Activated naive CD4-positive, alpha-beta T cell treated with anti-CD3 and anti-CD28 coated beads for 36 hours (primary cell): ENCODE measurements at regions of chr14 and their contacts with region 1.

Region 1: DNA sequence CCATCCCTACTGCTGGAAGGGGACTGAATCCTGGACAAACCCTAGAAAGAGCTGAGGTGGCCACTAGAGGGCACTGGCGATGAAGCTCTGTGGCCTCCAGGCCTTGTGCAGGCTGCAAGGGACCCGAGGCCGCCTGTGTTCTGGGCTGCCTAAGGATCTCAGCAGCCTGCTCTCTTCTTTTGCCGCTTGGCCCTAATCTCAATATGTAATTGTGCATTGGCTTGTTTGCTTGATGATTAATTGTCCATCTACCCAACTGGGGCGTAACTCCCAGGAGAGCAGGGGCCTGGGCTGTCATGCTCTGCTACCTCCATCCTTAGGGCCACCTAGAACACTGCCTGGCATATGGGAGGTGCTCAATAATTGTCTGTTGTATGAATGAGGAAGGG is 73.8 kb downstream of the SYNE3 start:
- DNase-seq: peak; percentile 88
- H3K4me3 Mint-ChIP-seq: no peak overlapping the region
- H3K27ac Mint-ChIP-seq: peak overlapping the region; percentile 20
- H3K4me1 Mint-ChIP-seq: peaks cover 7% of the 10 kb centered on the region
- H3K27me3 Mint-ChIP-seq: no peaks in the 10 kb centered on the region

Region 2: DNA sequence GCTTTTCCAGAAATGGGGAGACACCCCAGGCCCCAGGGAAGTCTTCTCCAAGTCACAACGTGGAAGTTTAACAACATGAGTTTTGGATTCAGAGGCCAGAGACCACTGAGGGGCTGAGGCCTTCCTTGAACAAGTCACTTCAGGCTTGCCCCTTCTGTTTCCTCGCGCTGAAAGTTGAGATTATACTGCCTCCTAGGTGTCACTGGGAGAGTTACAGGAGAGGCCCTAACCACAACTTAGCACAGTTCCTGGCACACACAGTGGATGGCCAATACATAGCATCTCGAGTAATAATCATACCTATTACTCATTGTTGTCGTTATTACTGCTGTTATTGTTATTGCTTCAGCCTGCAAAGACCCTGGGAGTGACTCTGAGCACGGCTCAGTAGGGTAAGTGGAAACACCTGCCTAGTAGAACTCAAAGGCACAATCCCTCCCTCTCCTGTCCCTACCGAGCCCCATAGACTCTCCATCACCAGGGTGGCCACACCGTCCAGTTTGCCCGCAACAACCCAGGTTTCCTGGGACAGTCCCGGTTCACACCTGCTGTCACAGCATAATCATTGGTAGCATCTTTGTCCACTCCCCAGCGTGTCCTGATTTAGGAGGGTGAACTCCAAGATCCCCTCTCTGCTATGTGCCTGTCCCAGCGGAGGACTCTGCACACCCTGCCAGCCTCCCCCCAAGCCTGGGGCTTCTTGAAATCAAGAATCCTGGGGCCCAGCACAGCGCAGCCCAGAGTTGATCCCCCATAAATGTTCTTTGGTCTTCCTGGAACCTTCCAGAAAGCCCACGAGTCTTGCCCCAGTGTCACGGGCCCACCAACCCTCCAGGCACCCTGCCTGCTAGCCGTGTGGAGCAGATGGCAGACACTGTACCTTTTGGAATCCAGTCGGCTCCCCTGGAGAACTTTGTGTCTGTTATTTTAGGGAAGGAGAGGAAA is 11.2 kb before region 1 on chr14:
- CTCF ChIA-PET with region 1: interaction called, 19 read pairs
- intact Hi-C with region 1: no loop called
- DNase-seq: peak; percentile 30
- H3K4me3 Mint-ChIP-seq: no peak overlapping the region
- H3K27ac Mint-ChIP-seq: no peak overlapping the region
- H3K4me1 Mint-ChIP-seq: no peaks in the 10 kb centered on the region
- H3K27me3 Mint-ChIP-seq: no peaks in the 10 kb centered on the region

Region 3: GRCh38 chr14:95460647-95461478 is 18.2 kb after region 1 on chr14:
- CTCF ChIA-PET with region 1: interaction called, 27 read pairs
- intact Hi-C with region 1: no loop called
- DNase-seq: no peak
- H3K4me3 Mint-ChIP-seq: no peak overlapping the region
- H3K27ac Mint-ChIP-seq: no peak overlapping the region
- H3K4me1 Mint-ChIP-seq: peaks cover 61% of the 10 kb centered on the region
- H3K27me3 Mint-ChIP-seq: no peaks in the 10 kb centered on the region

Region 4: DNA sequence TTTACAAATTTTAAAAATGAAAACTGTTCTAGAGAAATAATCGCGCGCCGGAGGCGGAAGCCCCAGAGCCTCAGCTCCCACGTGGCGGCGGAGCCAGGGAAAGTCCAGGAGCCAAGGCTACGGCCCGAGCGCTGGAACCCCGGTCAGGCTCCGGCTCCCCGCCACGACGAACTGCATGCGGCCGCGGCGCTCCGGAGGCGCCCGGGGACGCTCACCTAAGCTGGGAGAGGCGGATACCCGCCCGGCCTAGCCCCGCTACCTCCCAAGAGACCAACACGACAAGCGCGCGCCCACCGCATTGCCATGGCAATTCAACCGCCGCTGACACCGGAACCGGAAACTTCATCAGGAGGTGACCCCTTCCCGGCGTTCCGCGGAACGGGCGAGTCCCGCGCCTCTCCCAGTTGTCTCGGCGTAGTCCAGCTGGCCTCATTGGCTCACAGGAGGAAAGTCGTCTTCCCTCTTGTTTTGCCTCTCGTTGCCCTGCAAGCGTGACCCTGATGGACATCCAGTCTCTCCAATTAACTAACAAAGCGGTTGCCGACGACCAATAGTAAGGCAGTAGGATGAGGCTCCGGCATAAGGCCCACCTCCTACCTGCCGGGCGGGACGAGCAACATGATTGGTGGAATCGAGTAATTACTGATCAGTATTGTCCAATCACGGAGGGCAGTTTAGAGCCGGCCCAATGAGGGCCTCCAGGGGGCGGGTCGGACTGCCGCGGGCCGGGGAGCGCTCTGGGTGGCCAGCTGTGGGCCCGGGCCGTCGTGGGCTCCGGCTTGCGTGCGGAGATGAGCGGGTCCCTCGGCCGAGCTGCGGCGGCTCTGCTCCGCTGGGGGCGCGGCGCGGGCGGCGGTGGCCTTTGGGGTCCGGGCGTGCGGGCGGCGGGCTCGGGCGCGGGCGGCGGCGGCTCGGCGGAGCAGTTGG is 91.9 kb after region 1 on chr14 and contains the start of gene GLRX5:
- CTCF ChIA-PET with region 1: interaction called, 184 read pairs
- intact Hi-C with region 1: loop called (anchors 1 kb)
- DNase-seq: peak; percentile 99
- H3K4me3 Mint-ChIP-seq: peak within 1 kb of the TSS; percentile 92
- H3K27ac Mint-ChIP-seq: peak within 1 kb of the TSS; percentile 82
- H3K4me1 Mint-ChIP-seq: peaks cover 61% of the 10 kb centered on the region
- H3K27me3 Mint-ChIP-seq: no peaks in the 10 kb centered on the region
- total RNA-seq, gene GLRX5: 34.2 to 34.6 TPM

Region 5: DNA sequence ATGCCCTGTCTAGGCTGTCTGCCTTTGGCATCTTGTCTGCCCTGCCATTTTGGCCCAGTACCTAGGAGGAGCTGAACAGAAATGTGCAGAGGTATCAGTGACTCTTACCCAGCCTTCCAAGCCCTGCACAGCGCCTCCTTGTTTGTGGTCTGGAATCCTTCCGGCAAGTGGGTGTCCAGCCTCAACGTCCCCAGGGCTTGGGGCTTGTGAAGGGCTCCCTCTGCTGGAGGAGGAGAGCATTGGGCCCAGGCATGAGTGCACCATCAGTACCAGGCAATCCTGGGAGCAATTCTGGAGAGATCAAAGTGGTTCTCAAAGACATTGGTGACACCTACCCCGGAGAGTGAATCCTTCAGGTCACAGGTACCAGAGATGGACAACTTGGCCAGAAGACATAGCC is 241.2 kb after region 1 on chr14:
- CTCF ChIA-PET with region 1: interaction called, 3 read pairs
- intact Hi-C with region 1: loop called (anchors 10 kb)
- DNase-seq: peak; percentile 50
- H3K4me3 Mint-ChIP-seq: no peak overlapping the region
- H3K27ac Mint-ChIP-seq: no peak overlapping the region
- H3K4me1 Mint-ChIP-seq: no peaks in the 10 kb centered on the region
- H3K27me3 Mint-ChIP-seq: peaks cover 16% of the 10 kb centered on the region